ENCODE measurements at regions of chr7 and their contacts with region 1.

Region 1: DNA sequence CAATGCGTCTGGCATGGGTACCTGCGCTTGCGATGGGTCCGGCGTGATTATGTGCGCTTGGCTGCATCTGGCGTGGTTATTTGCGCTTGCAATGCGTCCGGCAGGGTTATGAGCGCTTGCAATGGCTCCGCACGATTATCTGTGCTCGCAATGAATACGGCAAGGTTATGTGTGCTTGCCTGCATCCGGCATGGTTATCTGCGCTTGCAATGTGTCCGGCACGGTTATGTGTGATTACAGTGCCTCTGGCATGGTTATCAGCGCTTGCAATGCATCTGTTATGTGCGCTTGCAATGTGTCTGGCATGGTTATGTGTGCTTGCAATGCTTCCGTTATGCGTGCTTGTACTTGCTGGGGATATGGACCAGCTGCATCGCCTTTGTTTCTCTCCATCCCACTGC is 37.7 kb downstream of the RBAK start:
- DNase-seq: no peak
- H3K4me3 ChIP-seq: no peak overlapping the region
- H3K27ac ChIP-seq: no peak overlapping the region
- H3K4me1 ChIP-seq: no peaks in the 10 kb centered on the region
- CTCF ChIP-seq: no peak

Region 2: DNA sequence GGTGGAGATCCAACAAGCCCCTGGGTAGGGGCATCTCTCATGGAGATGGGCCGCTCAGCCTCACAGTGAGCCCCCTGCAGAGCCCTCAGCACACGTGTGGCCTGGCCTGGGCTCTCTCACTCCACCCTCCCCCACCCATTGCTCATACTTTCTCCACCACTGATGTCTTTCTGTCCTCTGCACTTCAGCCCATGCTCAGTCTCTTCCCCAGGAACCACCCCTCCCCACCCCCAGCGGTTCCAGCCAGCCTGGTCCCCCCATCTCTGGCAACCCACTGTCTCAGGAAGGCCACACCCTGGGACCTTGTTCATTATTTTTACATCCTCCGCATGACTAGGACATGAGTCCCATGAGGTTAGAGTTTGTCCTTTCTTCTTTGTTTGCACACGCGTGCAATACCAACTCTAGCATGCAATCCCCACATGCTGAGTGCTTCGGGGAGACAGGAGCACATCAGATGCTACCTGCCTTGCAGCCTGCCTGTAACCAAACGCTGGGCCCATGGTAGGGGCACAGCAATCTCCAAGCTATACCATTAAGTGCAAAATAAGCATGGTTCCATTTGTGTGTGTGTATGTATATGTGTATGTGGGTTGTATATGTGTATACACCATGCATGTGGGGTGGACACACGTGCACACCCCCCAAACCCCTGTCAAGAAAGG is 809.6 kb before region 1 on chr7:
- CTCF ChIA-PET with region 1: no interaction called
- POLR2A ChIA-PET with region 1: no interaction called
- intact Hi-C with region 1: no loop called
- DNase-seq: no peak
- H3K4me3 ChIP-seq: no peak overlapping the region
- H3K27ac ChIP-seq: no peak overlapping the region
- H3K4me1 ChIP-seq: no peaks in the 10 kb centered on the region
- CTCF ChIP-seq: no peak

Region 3: DNA sequence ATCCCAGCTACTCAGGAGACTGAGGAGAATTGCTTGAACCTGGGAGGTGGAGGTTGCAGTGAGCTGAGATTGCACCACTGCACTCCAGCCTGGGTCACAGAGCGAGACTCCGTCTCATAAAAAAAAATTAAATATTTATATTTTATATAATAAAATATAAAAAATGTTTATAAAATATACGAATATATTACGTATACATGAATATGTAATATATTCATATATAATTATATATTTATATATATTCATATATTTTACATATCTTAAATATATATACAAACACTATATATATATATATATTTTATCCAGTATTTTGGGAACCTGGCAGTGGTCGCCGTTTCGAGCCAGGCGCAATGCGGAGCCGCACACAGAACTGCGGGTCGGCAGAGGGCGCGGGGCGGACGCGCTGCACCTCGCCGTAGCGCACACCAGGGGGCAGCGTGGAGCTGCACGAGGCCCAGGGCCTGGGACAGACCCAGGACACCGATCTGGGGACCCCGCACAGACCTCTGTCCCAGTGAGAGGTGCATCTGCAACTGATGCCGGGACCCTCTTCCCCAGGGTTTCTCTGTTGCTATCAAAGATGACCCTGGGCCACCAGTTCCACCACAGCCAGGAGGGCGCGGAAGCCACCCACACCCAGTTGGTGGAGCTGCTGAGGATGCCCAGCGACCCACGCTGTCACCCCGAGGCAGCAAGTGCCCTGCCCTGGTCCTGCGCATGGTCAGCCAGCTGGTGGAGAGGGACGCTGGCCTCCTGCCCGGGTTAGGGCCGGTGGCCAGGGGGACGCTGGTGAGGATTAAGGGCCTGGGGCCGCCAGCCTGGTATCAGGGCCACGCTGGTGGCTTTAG is 285.2 kb before region 1 on chr7:
- CTCF ChIA-PET with region 1: interaction called, 8 read pairs
- POLR2A ChIA-PET with region 1: no interaction called
- intact Hi-C with region 1: loop called (anchors 1 kb)
- DNase-seq: peak; percentile 55
- H3K4me3 ChIP-seq: no peak overlapping the region
- H3K27ac ChIP-seq: no peak overlapping the region
- H3K4me1 ChIP-seq: no peaks in the 10 kb centered on the region
- CTCF ChIP-seq: peak; percentile 73

Region 4: GRCh38 chr7:4830176-4830575 is 253.1 kb before region 1 on chr7:
- CTCF ChIA-PET with region 1: no interaction called
- POLR2A ChIA-PET with region 1: no interaction called
- intact Hi-C with region 1: loop called (anchors 1 kb)
- DNase-seq: peak; percentile 50
- H3K4me3 ChIP-seq: no peak overlapping the region
- H3K27ac ChIP-seq: no peak overlapping the region
- H3K4me1 ChIP-seq: no peaks in the 10 kb centered on the region
- CTCF ChIP-seq: peak; percentile 82

Region 5: GRCh38 chr7:4849369-4849768 is 233.9 kb before region 1 on chr7:
- CTCF ChIA-PET with region 1: no interaction called
- POLR2A ChIA-PET with region 1: no interaction called
- intact Hi-C with region 1: loop called (anchors 1 kb)
- DNase-seq: peak; percentile 31
- H3K4me3 ChIP-seq: no peak overlapping the region
- H3K27ac ChIP-seq: no peak overlapping the region
- H3K4me1 ChIP-seq: no peaks in the 10 kb centered on the region
- CTCF ChIP-seq: peak; percentile 69

Measured in OCI-LY7 (cell line).